ENCODE measurements at regions of chr5 and their contacts with region 1.

Region 1: GRCh38 chr5:59660737-59661136 is 232.8 kb downstream of the PDE4D start:
- DNase-seq: peak in 1 of 42 donors; percentile 34

Region 2: GRCh38 chr5:59506285-59506877 is 154.4 kb before region 1 on chr5:
- intact Hi-C with region 1: loop called (anchors 10 kb)
- DNase-seq: no peak

Measured in head of caudate nucleus (tissue), 42 donors.